ENCODE measurements at regions of chr10 and their contacts with region 1.

Region 1: DNA sequence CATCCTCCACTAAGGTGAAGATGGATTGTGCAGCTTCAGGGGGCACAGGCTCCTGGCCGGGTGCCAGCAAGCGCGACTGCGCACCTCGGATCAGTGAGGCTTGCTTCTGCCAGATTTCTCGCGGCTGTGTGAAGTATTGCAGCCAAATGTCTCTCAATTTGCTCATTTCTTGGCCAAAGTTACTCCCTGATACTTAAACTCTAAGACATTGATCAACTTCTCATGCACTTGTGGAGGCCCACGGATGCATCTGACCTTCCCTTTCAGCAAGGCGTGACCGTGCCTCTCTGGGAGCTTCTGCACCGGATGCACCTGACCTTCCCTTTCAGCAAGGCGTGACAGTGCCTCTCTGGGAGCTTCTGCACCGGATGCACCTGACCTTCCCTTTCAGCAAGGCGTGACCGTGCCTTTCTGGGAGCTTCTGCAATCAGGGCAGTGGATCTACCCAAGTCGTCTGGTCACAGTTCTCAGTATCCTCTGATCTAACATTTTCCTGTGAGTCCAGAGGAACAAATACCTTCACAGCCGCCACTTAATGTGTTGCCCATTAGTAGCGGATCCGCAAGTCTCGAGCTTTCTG is 248.3 kb downstream of the ADARB2 start:
- DNase-seq: peak; percentile 93
- H3K4me3 ChIP-seq: peak overlapping the region; percentile 46
- H3K27ac ChIP-seq: peak overlapping the region; percentile 62
- H3K4me1 ChIP-seq: peaks cover 54% of the 10 kb centered on the region
- CTCF ChIP-seq: 0 out of 2 replicates have a peak, but pooled peaks have one; percentile 10

Region 2: DNA sequence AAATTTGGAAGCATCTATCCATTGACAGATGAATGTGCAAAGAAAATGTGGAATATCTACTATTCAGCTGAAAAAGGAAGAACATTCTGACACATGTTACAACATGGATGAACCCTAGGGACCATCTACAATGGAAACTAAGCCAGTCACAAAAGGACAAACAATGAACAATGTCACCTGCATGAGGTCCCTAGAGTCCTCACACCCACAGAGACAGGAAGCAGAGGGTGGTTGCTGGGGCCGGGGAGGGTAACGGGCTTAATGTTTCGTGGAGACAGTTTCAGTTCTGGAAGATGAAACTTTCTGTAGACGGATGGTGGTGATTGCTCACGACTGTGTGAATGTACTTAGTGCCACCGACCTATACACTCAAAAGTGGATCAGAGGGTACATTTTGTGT is 34.6 kb before region 1 on chr10:
- CTCF ChIA-PET with region 1: no interaction called
- POLR2A ChIA-PET with region 1: interaction called, 3 read pairs
- intact Hi-C with region 1: loop called (anchors 1 kb)
- DNase-seq: peak; percentile 92
- H3K4me3 ChIP-seq: peak overlapping the region; percentile 55
- H3K27ac ChIP-seq: peak overlapping the region; percentile 79
- H3K4me1 ChIP-seq: peaks cover 30% of the 10 kb centered on the region
- CTCF ChIP-seq: no peak